MCF 10A (cell line): ENCODE measurements at regions of chrX and their contacts with region 1.

Region 1: GRCh38 chrX:48854898-48855297 is 19.5 kb upstream of the PCSK1N start:
- DNase-seq: peak; percentile 11
- H3K4me3 Mint-ChIP-seq: peak overlapping the region; percentile 24
- H3K27ac Mint-ChIP-seq: peak overlapping the region; percentile 29
- H3K4me1 Mint-ChIP-seq: peaks cover 7% of the 10 kb centered on the region
- H3K27me3 Mint-ChIP-seq: no peaks in the 10 kb centered on the region
- CTCF ChIP-seq: peak; percentile 37

Region 2: GRCh38 chrX:48917139-48918001 is 62.5 kb after region 1 on chrX:
- CTCF ChIA-PET with region 1: interaction called, 3 read pairs
- POLR2A ChIA-PET with region 1: no interaction called
- intact Hi-C with region 1: loop called (anchors 1 kb)
- DNase-seq: peak; percentile 88
- H3K4me3 Mint-ChIP-seq: peak overlapping the region; percentile 94
- H3K27ac Mint-ChIP-seq: peak overlapping the region; percentile 96
- H3K4me1 Mint-ChIP-seq: peaks cover 18% of the 10 kb centered on the region
- H3K27me3 Mint-ChIP-seq: no peaks in the 10 kb centered on the region
- CTCF ChIP-seq: peak; percentile 75